HepG2 (cell line): ENCODE measurements at regions of chr3 and their contacts with region 1.

Region 1: GRCh38 chr3:186108941-186109865 is at the start of gene ETV5:
- DNase-seq: peak; percentile 99
- ATAC-seq: peak; percentile 93
- H3K4me3 ChIP-seq: peak within 1 kb of the TSS; percentile 84 to 97 (median 95)
- H3K27ac ChIP-seq: peak within 1 kb of the TSS; percentile 95
- H3K4me1 ChIP-seq: peaks cover 56% of the 10 kb centered on the region
- H3K27me3 ChIP-seq: no peaks in the 10 kb centered on the region; a peak in 1 of 5 replicates
- CTCF ChIP-seq: no peak
- EP300 ChIP-seq: peak in 1 of 2 experiments; percentile 5; a peak in 1 of 4 replicates
- POLR2A ChIP-seq: peak; percentile 89 to 94
- RAD21 ChIP-seq: no peak
- total RNA-seq, gene ETV5: 52.9 and 60.0 TPM in 2 replicates

Region 2: GRCh38 chr3:186044973-186045372 is 64.2 kb before region 1 on chr3:
- CTCF ChIA-PET with region 1: no interaction called
- POLR2A ChIA-PET with region 1: interaction called, 6 read pairs
- in situ Hi-C with region 1: no loop called
- intact Hi-C with region 1: loop called (anchors 2 kb)
- DNase-seq: peak; percentile 92
- ATAC-seq: peak; percentile 87
- H3K4me3 ChIP-seq: peak overlapping the region in 1 of 3 experiments; percentile 29; a peak in 2 of 6 replicates
- H3K27ac ChIP-seq: peak overlapping the region; percentile 54
- H3K4me1 ChIP-seq: peaks cover 49% of the 10 kb centered on the region
- H3K27me3 ChIP-seq: no peaks in the 10 kb centered on the region
- CTCF ChIP-seq: peak; percentile 27; the same call in 1 of the 2 replicates
- EP300 ChIP-seq: peak in 1 of 2 experiments; percentile 51; a peak in 1 of 4 replicates
- POLR2A ChIP-seq: no peak
- RAD21 ChIP-seq: no peak

Region 3: DNA sequence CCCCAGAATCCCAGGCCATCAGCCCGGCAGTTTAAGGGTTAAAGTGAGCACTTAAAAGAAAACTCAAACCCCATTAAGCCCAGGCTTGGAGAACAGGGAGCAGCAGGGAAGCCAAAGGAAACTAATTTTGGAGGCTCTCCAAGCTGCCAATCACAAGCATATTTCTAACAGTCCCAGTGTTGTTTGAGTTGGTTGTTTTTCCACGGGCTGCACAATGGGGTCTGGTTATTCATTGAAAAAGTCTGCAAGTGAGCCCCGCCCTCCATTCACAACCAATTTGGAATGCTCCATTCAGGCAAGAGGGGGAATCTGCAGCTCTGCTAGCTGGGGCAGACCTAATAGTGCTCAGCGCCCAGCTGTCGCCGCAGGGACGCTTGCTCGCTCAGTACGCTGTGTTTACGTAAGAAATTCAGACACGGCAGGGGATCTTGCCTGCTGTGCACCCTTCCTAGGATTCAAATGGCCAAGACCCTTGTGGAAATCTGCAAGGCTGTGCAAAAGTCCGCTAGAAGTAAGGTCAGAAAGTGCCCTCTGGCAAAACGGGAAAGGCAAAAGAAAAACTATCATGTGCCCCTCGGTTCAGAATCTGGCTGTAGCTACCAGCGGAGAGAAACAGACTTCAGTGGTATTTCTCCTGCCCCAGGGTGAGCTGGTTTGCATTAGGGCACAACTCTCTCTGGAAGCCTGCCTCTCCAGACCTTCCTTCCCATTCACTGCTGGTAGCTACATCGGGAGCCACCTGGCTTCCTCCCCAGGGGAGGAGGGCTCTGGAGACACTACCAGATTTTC is 11.3 kb before region 1 on chr3:
- CTCF ChIA-PET with region 1: no interaction called
- POLR2A ChIA-PET with region 1: interaction called, 110 read pairs
- in situ Hi-C with region 1: no loop called
- intact Hi-C with region 1: loop called (anchors 1 kb)
- DNase-seq: peak; percentile 99
- ATAC-seq: peak; percentile 90
- H3K4me3 ChIP-seq: peak overlapping the region; percentile 44 to 69 (median 58)
- H3K27ac ChIP-seq: peak overlapping the region; percentile 85
- H3K4me1 ChIP-seq: peaks cover 88% of the 10 kb centered on the region
- H3K27me3 ChIP-seq: no peaks in the 10 kb centered on the region
- CTCF ChIP-seq: no peak
- EP300 ChIP-seq: peak; percentile 30 to 80; a peak in 2 of 4 replicates
- POLR2A ChIP-seq: peak; percentile 78 to 83
- RAD21 ChIP-seq: 0 out of 2 replicates have a peak, but pooled peaks have one; percentile 13